ENCODE measurements at regions of chr3 and their contacts with region 1.

Region 1: DNA sequence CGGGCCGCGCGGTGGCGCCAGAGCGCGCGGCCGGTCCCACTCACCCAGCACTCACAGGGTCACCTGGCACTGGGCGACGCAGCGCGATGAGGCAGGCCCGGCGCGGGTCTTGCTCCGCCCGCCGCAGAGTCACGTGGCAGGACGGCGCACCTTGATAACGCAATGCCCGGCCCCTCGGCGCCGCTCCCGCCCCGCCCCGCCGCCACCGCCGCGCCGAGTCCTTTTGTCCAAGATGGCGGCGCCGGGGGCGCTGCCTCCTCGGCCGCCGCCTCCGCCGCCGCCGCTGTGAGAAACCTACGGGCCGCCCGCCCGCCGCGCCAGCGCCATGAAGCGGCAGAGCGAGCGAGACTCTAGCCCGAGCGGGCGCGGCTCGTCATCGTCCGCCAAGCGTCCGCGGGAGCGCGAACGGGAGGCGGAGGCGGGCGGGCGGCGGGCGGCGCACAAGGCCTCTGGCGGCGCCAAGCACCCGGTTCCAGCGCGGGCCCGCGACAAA is at the start of gene RBM15B:
- DNase-seq: peak; percentile 98
- H3K4me3 Mint-ChIP-seq: peak within 1 kb of the TSS; percentile 82
- H3K27ac Mint-ChIP-seq: peak within 1 kb of the TSS; percentile 93
- H3K4me1 Mint-ChIP-seq: peaks cover 78% of the 10 kb centered on the region
- H3K27me3 Mint-ChIP-seq: no peaks in the 10 kb centered on the region

Region 2: GRCh38 chr3:50450209-50450921 is 940.8 kb before region 1 on chr3:
- CTCF ChIA-PET with region 1: no interaction called
- DNase-seq: peak; percentile 85
- H3K4me3 Mint-ChIP-seq: peak overlapping the region; percentile 74
- H3K27ac Mint-ChIP-seq: peak overlapping the region; percentile 96
- H3K4me1 Mint-ChIP-seq: peaks cover 30% of the 10 kb centered on the region
- H3K27me3 Mint-ChIP-seq: peaks cover 14% of the 10 kb centered on the region

Region 3: GRCh38 chr3:51378065-51378464 is 13.1 kb before region 1 on chr3:
- CTCF ChIA-PET with region 1: interaction called, 14 read pairs
- DNase-seq: peak; percentile 18
- H3K4me3 Mint-ChIP-seq: no peak overlapping the region
- H3K27ac Mint-ChIP-seq: no peak overlapping the region
- H3K4me1 Mint-ChIP-seq: peaks cover 18% of the 10 kb centered on the region
- H3K27me3 Mint-ChIP-seq: peaks cover 5% of the 10 kb centered on the region

Region 4: GRCh38 chr3:51434746-51435327 is 43.7 kb after region 1 on chr3:
- CTCF ChIA-PET with region 1: interaction called, 26 read pairs
- DNase-seq: peak; percentile 68
- H3K4me3 Mint-ChIP-seq: no peak overlapping the region
- H3K27ac Mint-ChIP-seq: no peak overlapping the region
- H3K4me1 Mint-ChIP-seq: no peaks in the 10 kb centered on the region
- H3K27me3 Mint-ChIP-seq: no peaks in the 10 kb centered on the region

Region 5: GRCh38 chr3:51670823-51671733 is 280.0 kb after region 1 on chr3 and contains the start of gene TEX264:
- CTCF ChIA-PET with region 1: interaction called, 22 read pairs
- DNase-seq: peak; percentile 95
- H3K4me3 Mint-ChIP-seq: peak within 1 kb of the TSS; percentile 84
- H3K27ac Mint-ChIP-seq: peak within 1 kb of the TSS; percentile 90
- H3K4me1 Mint-ChIP-seq: peaks cover 76% of the 10 kb centered on the region
- H3K27me3 Mint-ChIP-seq: no peaks in the 10 kb centered on the region

Region 6: DNA sequence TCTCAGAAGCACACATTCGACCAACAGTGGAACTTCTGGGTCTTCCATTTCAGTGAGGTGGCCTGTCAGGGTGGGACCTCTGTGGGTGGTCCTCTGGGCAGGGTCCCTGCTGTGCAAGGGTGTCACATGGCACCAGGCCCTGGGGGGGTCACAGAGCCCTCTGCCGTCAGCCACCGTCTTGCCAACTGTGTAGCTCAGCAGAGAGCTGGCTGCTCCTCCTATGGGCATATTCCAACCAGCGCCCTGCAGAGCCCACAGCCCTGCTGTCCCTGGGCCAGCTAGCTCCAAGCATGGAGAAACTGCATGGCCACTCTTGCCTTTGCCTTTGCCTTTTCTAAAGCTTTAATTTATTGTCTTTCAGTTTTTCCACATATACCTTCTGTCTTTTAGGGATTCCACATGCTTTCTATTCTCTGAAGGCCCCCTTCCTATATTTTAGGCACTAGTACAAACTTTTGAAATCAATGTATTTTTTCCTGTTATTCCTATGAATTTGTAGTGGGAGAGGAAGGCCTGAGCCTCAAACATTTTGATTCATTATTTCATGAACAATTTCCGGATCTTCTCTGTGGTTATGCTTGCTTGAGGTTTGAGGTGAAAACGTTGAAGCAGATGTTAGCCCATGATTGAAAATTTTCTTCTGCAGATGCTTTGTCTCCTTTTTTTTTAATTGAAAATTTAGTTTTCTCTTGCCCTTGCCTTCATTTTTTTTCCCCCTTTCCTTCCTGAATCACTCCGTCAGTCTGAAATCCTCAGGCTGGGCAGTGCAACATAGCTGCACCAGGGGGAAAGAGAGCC is 500.3 kb after region 1 on chr3:
- CTCF ChIA-PET with region 1: no interaction called
- DNase-seq: no peak
- H3K4me3 Mint-ChIP-seq: no peak overlapping the region
- H3K27ac Mint-ChIP-seq: no peak overlapping the region
- H3K4me1 Mint-ChIP-seq: peaks cover 11% of the 10 kb centered on the region
- H3K27me3 Mint-ChIP-seq: peaks cover 37% of the 10 kb centered on the region

Measured in activated naive CD4-positive, alpha-beta T cell treated with anti-CD3 and anti-CD28 coated beads, Interleukin-2, amount 10 ng/mL, durations not matched to agents 7 days and 5 days (primary cell).